ENCODE measurements at regions of chr16 and their contacts with region 1.

Region 1: GRCh38 chr16:6913566-6913965 is 419.1 kb upstream of the RBFOX1 start:
- ATAC-seq: no peak
- H3K4me3 ChIP-seq: no peak overlapping the region
- H3K27ac ChIP-seq: no peak overlapping the region
- H3K4me1 ChIP-seq: peaks cover 0 to 9% of the 10 kb centered on the region in 2 donors

Region 2: DNA sequence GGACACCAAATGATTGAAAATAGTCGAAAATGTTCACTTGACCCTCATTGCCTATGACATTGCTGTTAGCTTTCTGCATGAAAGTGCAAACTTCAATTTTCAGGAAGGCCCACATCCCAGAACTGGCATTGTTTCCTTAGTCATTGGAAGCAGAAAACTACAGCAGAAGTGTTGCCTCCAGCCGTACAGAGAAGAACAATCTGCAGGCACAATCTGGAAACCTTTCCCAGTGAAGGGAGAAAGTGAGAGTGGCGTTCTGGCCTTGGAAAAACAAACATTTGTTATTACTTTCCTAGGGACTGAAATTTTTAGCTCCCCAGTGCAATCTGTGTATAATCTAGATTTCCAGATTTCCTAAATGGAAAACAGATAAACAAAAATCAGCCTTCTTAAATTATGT is 110.4 kb before region 1 on chr16:
- in situ Hi-C with region 1: loop called in 1 of 9 experiments (anchors 25 kb)
- ATAC-seq: no peak
- H3K4me3 ChIP-seq: no peak overlapping the region
- H3K27ac ChIP-seq: no peak overlapping the region
- H3K4me1 ChIP-seq: no peaks in the 10 kb centered on the region

Region 3: DNA sequence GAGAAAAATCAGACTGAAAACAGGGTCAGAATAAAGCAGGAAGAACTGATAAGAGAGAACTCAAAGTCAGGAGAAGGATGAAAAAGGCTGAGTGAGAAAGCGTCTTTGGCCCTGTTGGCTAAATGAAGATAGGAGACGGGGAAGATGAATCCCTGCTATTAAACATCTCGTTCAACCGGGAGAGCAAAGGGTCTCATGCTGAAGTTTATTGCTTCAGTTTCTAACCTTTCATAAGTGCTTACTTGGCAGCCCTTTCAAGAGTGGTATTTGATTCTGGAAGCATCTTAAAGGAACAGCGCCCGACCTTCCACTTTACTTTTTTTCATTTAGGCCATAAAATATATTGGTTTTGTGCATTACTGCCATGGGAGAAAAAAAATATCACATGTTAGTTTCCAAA is 130.8 kb after region 1 on chr16:
- in situ Hi-C with region 1: no loop called
- ATAC-seq: no peak
- H3K4me3 ChIP-seq: no peak overlapping the region
- H3K27ac ChIP-seq: no peak overlapping the region
- H3K4me1 ChIP-seq: peaks cover 0 to 12% of the 10 kb centered on the region in 2 donors

Region 4: GRCh38 chr16:7182510-7183109 is 269.0 kb after region 1 on chr16:
- in situ Hi-C with region 1: no loop called
- ATAC-seq: no peak
- H3K4me3 ChIP-seq: no peak overlapping the region
- H3K27ac ChIP-seq: no peak overlapping the region
- H3K4me1 ChIP-seq: peaks cover 0 to 13% of the 10 kb centered on the region in 2 donors